ENCODE measurements at regions of chr11 and their contacts with region 1.

Region 1: DNA sequence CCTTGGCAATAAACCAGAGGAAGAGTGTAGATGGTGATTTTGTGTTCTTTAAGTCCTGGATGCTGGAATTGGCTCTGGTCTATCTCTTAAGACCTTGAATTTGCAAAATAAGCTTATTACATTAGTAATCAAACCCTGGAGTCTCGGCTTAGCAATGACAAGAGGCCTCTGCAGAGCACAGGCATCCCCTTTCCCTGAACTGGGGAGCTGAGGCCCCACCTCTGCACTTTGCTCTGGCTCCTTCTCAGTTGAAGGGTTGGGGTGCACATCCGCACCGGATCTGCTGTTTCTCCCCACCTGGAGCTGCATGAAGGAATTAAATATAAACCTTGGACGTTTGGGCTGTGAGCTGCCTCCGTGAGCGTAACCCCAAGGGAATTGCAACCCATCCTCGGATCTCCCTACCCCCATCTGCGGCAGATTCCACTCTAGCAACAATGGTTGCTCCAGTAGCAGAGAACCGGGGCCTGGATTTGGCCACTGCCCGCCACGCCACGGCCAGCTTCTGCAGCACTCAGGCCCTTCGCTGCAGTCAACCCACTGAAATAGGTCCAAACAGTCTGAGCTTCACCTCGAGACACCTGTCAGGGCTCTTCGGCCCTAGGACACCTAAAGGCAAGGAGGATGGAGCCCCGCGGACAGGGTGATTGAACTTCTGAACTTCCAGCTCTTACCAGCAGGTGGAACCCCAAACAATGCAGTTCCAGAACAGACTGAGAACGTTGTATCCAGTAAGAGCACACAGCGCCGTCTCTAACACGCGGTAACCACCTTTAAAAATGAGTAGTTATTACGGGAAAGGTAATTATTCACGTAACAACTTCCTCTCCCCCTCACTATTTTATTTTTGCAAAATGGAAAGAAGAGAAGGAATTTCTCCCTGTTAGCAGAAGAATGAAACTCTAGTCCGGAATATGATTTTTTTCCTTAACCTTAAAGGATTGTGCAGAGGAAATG is 54.8 kb upstream of the CAPRIN1 start:
- DNase-seq: peak; percentile 83
- ATAC-seq: peak; percentile 96
- H3K4me3 ChIP-seq: peak overlapping the region; percentile 22 to 47
- H3K27ac ChIP-seq: no peak overlapping the region
- H3K4me1 ChIP-seq: peaks cover 5 to 21% of the 10 kb centered on the region in 2 experiments; a peak in 3 of 4 replicates
- H3K27me3 ChIP-seq: no peaks in the 10 kb centered on the region
- CTCF ChIP-seq: peak; percentile 76 to 90 (median 79)
- POLR2A ChIP-seq: no peak
- RAD21 ChIP-seq: peak; percentile 94

Region 2: GRCh38 chr11:34051349-34052035 is 54.7 kb after region 1 on chr11 and contains the start of gene CAPRIN1:
- CTCF ChIA-PET with region 1: no interaction called
- POLR2A ChIA-PET with region 1: interaction called, 3 read pairs
- RAD21 ChIA-PET with region 1: no interaction called
- intact Hi-C with region 1: loop called (anchors 5 kb)
- DNase-seq: peak; percentile 84
- ATAC-seq: peak; percentile 84
- H3K4me3 ChIP-seq: peak within 1 kb of the TSS; percentile 69 to 71
- H3K27ac ChIP-seq: peak within 1 kb of the TSS; percentile 99
- H3K4me1 ChIP-seq: peaks cover 17 to 37% of the 10 kb centered on the region in 2 experiments; a peak in 3 of 4 replicates
- H3K27me3 ChIP-seq: no peaks in the 10 kb centered on the region
- CTCF ChIP-seq: no peak
- POLR2A ChIP-seq: peak; percentile 71
- RAD21 ChIP-seq: 0 out of 2 replicates have a peak, but pooled peaks have one; percentile 20
- total RNA-seq, gene CAPRIN1: 285 TPM

Region 3: GRCh38 chr11:34068111-34068510 is 71.3 kb after region 1 on chr11:
- CTCF ChIA-PET with region 1: no interaction called
- POLR2A ChIA-PET with region 1: no interaction called
- RAD21 ChIA-PET with region 1: no interaction called
- intact Hi-C with region 1: loop called (anchors 5 kb)
- DNase-seq: no peak
- ATAC-seq: no peak
- H3K4me3 ChIP-seq: no peak overlapping the region
- H3K27ac ChIP-seq: no peak overlapping the region
- H3K4me1 ChIP-seq: peaks cover 29 to 75% of the 10 kb centered on the region in 2 experiments
- H3K27me3 ChIP-seq: no peaks in the 10 kb centered on the region
- CTCF ChIP-seq: no peak
- POLR2A ChIP-seq: no peak
- RAD21 ChIP-seq: no peak

Region 4: DNA sequence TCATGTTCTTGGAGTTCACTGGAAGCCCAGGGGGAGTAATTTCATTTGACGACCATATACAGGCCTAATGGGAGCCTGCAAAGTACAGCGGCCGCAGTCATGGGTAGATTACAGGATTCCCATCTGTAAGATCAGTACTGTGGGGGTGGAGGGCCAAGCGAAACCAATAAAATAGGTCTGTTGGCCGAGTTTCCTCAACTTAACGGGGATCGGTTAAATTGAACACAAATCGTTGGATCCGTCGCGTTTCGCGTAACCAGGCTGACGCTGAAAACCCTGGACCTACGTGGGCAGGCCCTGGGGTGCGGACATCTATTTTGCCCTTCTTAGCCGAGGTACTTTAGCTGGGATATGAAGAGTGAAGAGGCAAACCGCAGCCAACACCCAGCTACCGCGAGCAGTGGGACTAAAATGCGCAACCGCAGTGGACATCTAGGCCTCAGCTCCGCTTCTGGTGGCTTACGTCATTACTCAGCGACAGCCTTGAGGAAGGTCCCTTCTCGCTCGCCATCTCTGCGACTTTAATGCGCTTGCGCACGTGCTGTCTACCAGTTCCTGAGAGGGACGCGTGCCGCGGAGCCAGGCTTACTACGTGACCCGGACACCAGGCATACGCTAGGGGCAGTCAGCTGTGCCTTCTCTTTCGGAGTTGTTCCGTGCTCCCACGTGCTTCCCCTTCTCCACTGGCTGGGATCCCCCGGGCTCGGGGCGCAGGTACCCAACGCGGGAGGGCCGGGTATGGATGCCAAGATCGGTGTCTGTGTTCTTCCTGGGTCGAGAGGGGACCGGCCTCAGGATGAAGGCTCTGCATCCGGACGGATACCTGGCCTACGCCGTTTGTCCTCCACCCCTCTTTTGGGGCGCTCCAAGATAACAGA is 108.5 kb after region 1 on chr11 and contains the start of gene NAT10:
- CTCF ChIA-PET with region 1: interaction called, 3 read pairs
- POLR2A ChIA-PET with region 1: no interaction called
- RAD21 ChIA-PET with region 1: no interaction called
- intact Hi-C with region 1: loop called (anchors 1 kb)
- DNase-seq: peak; percentile 98
- ATAC-seq: peak; percentile 88
- H3K4me3 ChIP-seq: peak within 1 kb of the TSS; percentile 89 to 96
- H3K27ac ChIP-seq: peak within 1 kb of the TSS; percentile 73
- H3K4me1 ChIP-seq: peaks cover 4 to 17% of the 10 kb centered on the region in 2 experiments; a peak in 3 of 4 replicates
- H3K27me3 ChIP-seq: no peaks in the 10 kb centered on the region
- CTCF ChIP-seq: no peak
- POLR2A ChIP-seq: peak; percentile 95
- RAD21 ChIP-seq: no peak
- total RNA-seq, gene NAT10: 101 TPM

Measured in HCT116 (cell line).